Activated CD4-positive, alpha-beta T cell treated with anti-CD3 and anti-CD28 coated beads, Interleukin-2, amount 10 ng/mL, durations not matched to agents 7 days and 5 days (primary cell): ENCODE measurements at regions of chr10 and their contacts with region 1.

Region 1: DNA sequence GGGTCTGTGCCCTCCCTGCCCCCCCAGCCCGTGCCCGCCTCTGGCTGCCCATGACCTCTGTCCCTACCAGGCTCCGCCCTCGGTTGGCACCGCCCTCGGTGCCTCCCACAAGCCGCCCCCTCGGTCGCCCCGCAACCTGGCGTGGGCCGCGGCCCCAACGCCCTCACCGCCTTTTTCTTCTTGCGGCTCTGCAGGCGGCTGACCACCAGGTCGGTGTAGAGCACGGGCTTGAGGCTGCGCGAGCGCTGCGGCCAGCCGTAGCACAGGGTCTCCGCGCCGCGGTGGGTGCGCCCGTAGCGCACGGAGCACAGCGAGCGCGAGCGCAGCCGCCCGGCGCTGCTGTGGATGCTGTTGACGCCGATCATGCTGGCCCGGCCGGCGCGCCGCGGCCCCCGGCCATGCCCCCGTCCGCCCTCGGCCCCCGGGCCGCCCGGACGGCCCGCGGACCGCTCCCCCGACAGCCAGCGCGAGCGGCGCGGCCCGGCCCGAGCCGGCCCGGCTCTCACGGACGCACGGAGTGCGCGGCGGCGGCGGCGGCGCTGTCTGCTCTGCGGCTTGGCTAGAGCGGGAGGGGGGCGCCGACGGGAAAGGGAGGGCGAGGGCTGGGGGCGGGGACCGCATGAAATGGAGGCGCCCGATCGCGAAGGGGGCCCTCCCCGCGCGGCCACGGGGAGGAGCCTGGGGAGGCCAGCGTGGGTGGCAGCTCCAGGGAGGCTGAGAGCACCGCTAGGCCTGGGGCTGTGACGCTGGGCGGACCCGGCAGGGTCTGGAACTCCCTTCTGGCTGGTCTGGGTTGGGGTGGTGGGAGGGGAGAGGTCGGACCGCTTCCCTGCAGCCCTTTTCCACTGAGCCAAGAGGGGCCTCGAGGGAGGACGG is 9.6 kb downstream of the PSD start:
- DNase-seq: peak; percentile 51
- H3K4me3 Mint-ChIP-seq: peak overlapping the region; percentile 44
- H3K27ac Mint-ChIP-seq: no peak overlapping the region
- H3K4me1 Mint-ChIP-seq: peaks cover 31% of the 10 kb centered on the region
- H3K27me3 Mint-ChIP-seq: peaks cover 24% of the 10 kb centered on the region

Region 2: DNA sequence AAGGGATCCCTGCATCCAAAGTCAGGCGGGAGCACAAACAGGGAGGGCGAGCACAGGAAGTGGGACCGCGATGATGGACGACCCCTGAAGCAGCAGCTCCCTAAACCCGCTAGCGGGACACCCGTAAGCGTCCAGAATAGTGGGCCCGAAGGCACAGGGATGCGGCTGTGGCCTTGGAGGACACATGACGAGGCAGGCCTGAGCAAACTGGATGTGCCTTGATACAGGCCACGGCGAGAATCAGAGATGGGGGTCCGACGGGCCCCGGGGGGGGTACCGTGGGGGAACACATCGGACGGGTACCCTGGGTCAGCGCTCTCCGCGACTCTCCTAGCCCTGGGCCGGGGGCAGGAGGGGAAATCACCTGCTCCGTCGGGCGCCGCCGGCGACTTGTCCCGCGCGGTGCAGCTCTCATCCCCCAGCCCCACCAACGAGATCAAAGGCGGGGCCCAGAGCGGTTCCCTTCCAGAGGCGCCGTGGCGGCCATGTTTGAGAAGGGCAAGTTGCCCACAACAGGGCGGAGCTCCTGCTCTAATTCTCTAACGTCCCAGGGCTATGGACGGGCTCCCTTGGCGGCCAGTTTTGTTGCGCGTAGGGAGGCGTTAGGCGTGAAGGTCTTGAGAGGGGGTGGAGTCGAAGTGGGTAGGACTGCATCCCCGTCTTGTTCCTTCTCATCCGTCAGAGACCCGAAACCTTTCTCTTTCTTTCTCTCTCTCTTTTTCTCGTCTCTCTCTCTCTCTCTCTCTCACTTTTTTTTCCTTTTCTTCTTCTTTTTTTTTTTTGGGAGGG is 23.4 kb after region 1 on chr10 and contains the start of gene CUEDC2:
- CTCF ChIA-PET with region 1: interaction called, 10 read pairs
- POLR2A ChIA-PET with region 1: no interaction called
- DNase-seq: peak; percentile 97
- H3K4me3 Mint-ChIP-seq: peak within 1 kb of the TSS; percentile 94
- H3K27ac Mint-ChIP-seq: peak within 1 kb of the TSS; percentile 95
- H3K4me1 Mint-ChIP-seq: peaks cover 49% of the 10 kb centered on the region
- H3K27me3 Mint-ChIP-seq: no peaks in the 10 kb centered on the region
- total RNA-seq, gene CUEDC2: 63.6 to 68.9 TPM